ENCODE measurements at regions of chr13 and their contacts with region 1.

Region 1: DNA sequence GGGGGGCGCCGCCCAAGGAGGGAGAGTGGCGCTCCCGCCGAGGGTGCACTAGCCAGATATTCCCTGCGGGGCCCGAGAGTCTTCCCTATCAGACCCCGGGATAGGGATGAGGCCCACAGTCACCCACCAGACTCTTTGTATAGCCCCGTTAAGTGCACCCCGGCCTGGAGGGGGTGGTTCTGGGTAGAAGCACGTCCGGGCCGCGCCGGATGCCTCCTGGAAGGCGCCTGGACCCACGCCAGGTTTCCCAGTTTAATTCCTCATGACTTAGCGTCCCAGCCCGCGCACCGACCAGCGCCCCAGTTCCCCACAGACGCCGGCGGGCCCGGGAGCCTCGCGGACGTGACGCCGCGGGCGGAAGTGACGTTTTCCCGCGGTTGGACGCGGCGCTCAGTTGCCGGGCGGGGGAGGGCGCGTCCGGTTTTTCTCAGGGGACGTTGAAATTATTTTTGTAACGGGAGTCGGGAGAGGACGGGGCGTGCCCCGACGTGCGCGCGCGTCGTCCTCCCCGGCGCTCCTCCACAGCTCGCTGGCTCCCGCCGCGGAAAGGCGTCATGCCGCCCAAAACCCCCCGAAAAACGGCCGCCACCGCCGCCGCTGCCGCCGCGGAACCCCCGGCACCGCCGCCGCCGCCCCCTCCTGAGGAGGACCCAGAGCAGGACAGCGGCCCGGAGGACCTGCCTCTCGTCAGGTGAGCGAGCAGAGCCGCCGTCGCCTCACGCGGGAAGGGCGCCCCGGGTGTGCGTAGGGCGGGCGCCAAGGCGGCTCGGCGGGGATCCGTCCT is at the start of gene RB1:
- DNase-seq: peak; percentile 85 to 86
- H3K4me3 ChIP-seq: peak within 1 kb of the TSS; percentile 73 to 88 (median 84)
- H3K27ac ChIP-seq: peak within 1 kb of the TSS; percentile 98 to 99
- H3K4me1 ChIP-seq: peaks cover 0 to 8% of the 10 kb centered on the region in 2 donors
- H3K27me3 ChIP-seq: no peaks in the 10 kb centered on the region
- CTCF ChIP-seq: no peak
- POLR2A ChIP-seq: peak; percentile 96
- total RNA-seq, gene RB1: 24.0 to 45.2 (median 43.6) TPM

Region 2: DNA sequence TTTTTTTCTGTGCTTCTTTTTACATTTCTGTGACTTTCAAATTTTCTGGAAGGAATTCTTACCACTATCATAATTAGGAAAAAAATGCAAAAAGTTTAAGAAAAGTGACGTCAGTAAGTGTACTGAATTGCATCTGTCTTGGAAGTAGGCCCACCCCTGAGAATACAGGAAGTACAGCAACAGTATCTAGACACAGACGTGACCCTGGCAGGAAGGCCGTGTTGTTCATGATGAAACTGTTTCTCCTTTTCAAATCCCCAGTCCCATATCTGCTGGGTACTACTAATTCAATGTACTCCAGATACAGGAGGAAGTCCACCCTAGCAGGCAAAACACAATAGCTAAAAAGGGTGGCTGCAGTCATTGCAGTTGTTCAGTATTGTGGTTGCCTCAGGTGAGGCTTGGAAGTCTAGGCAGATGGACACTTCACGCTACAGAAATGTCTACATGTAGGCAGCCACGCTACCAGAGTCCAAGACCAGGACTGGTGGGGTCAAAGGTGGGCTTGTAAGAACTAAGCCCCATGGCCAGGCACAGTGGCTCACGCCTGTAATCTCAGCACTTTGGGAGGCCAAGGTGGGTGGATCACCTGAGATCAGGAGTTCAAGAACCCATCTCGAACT is 159.0 kb before region 1 on chr13:
- intact Hi-C with region 1: loop called (anchors 10 kb)
- DNase-seq: no peak
- H3K4me3 ChIP-seq: no peak overlapping the region
- H3K27ac ChIP-seq: peak overlapping the region in 1 of 2 donors; percentile 48
- H3K4me1 ChIP-seq: no peaks in the 10 kb centered on the region
- H3K27me3 ChIP-seq: no peaks in the 10 kb centered on the region
- CTCF ChIP-seq: no peak
- POLR2A ChIP-seq: no peak

Measured in breast epithelium (tissue), 4 donors.